Dorsolateral prefrontal cortex (tissue), 120 donors: ENCODE measurements at regions of chr14 and their contacts with region 1.

Region 1: GRCh38 chr14:81269100-81269978 is 48.6 kb upstream of the GTF2A1 start:
- DNase-seq: peak in 1 of 10 donors; percentile 7
- H3K4me3 ChIP-seq: no peak overlapping the region
- H3K27ac ChIP-seq: peak overlapping the region in 3 of 59 donors; percentile 16 to 17 (median 16)
- H3K27me3 ChIP-seq: peaks cover 0 to 16% (median 0%) of the 10 kb centered on the region in 45 donors
- CTCF ChIP-seq: peak; percentile 68 to 97 (median 86)

Region 2: DNA sequence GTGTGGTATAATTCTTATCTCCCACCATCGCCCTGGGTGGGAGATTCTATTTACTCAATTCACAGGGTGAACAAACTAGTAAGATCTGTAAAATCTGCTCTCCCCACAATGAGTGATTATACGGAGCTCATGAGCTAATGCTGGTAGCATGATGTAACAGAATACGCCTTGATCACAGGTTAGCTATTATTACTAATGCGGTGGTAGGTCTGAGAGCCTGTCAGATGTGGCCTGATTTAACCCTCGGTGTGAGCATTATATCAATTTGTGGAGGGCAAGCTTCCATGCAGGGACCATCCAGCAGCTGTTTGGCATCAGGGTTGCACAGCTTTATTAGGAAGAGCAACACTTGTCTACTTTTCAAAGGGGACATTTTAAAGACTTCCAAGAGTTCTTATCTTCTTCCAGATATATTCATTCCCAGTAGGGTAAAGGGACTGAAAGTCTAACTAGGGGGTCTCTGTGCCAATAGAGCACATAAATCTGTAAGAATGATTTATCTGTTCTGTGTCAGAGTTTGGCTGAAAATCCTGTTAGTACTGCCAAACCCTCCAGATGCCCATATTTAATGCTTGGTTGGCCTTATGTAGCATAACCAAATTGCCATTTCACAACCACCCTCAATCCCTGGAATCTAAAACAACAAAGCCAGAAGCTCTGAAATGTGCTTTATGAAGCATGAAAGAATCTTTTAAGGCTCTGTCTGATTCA is 295.3 kb before region 1 on chr14:
- intact Hi-C with region 1: no loop called
- DNase-seq: no peak
- H3K4me3 ChIP-seq: no peak overlapping the region
- H3K27ac ChIP-seq: no peak overlapping the region
- H3K27me3 ChIP-seq: peaks cover 0 to 4% (median 0%) of the 10 kb centered on the region in 45 donors
- CTCF ChIP-seq: no peak

Region 3: DNA sequence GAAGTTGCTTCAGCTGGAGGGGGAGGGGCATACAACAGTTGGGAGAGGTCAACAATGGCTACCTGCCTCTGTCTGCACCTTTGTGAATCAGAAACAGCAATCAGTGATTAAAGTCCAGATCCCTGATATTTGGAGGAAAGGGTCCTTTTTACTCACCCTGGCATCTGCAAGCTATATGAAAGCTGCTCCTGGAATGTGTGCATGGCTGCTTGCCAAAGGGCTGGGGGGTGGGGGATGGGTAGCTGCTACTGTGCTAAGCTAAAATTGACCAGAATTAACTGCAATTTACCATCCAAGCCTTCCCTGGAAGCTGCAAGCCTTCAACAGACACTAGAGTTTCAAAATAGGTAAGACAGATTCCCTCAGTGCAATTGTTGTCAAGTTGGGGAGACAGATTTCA is 35.1 kb before region 1 on chr14:
- intact Hi-C with region 1: no loop called
- DNase-seq: no peak
- H3K4me3 ChIP-seq: no peak overlapping the region
- H3K27ac ChIP-seq: no peak overlapping the region
- H3K27me3 ChIP-seq: no peaks in the 10 kb centered on the region
- CTCF ChIP-seq: no peak

Region 4: GRCh38 chr14:81384900-81385299 is 115.6 kb after region 1 on chr14:
- intact Hi-C with region 1: no loop called
- DNase-seq: peak in 1 of 10 donors; percentile 22
- H3K4me3 ChIP-seq: no peak overlapping the region
- H3K27ac ChIP-seq: peak overlapping the region in 13 of 59 donors; percentile 4 to 72 (median 50)
- H3K27me3 ChIP-seq: no peaks in the 10 kb centered on the region
- CTCF ChIP-seq: no peak

Region 5: GRCh38 chr14:81464247-81465002 is 195.1 kb after region 1 on chr14:
- intact Hi-C with region 1: loop called in 1 of 2 experiments (anchors 2 kb)
- DNase-seq: peak in 1 of 10 donors; percentile 42
- H3K4me3 ChIP-seq: peak overlapping the region in 57 of 59 donors; percentile 12 to 67 (median 50)
- H3K27ac ChIP-seq: peak overlapping the region in 10 of 59 donors; percentile 15 to 63 (median 37)
- H3K27me3 ChIP-seq: no peaks in the 10 kb centered on the region
- CTCF ChIP-seq: peak; percentile 76 to 98 (median 91)